ENCODE measurements at regions of chr16 and their contacts with region 1.

Region 1: GRCh38 chr16:70770626-70771552 is 30.1 kb downstream of the VAC14 start:
- DNase-seq: peak; percentile 45
- H3K4me3 Mint-ChIP-seq: no peak overlapping the region
- H3K27ac Mint-ChIP-seq: no peak overlapping the region
- H3K4me1 Mint-ChIP-seq: peaks cover 9% of the 10 kb centered on the region
- H3K27me3 Mint-ChIP-seq: no peaks in the 10 kb centered on the region

Region 2: DNA sequence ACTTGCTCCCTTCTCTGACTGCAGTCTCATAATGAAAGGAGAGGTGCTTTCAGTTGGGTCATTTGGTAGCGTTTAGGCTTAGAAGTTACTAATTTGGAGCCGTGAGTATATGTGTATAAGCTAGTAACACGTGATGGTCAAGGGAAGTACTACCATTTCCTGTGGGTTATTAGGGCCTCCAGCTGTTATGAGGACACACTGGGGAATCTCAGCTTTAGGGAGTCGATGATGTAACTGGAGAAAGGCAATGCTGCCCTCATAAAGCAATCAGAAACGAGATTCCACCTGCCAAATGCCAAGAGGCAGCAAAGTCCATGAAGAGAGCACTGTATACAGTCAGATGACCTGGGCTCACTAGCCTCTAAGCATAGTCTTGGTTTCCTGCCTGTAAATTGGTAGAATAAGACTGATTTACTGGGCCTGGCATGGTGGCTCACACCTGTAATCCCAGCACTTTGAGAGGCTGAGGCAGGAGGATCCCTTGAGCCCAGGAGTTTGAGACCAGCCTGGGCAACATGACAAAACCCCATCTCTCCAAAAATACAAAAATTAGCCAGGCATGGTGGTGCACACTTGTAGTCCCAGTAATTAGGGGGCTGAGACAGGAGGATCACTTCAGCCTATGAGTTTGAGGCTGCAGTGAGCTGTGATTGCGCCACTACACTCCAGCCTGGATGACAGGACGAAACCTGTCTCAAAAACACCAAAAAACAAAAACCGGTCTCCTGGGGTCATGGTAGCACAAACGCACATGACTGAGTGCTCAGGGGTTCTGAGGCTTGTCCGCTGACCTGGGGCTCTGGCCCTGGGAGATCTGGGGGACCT is 194.2 kb before region 1 on chr16:
- intact Hi-C with region 1: loop called (anchors 2 kb)
- DNase-seq: no peak
- H3K4me3 Mint-ChIP-seq: no peak overlapping the region
- H3K27ac Mint-ChIP-seq: peak overlapping the region; percentile 10
- H3K4me1 Mint-ChIP-seq: peaks cover 17% of the 10 kb centered on the region
- H3K27me3 Mint-ChIP-seq: no peaks in the 10 kb centered on the region

Region 3: GRCh38 chr16:70589998-70590471 is 180.9 kb before region 1 on chr16:
- intact Hi-C with region 1: no loop called
- DNase-seq: no peak
- H3K4me3 Mint-ChIP-seq: no peak overlapping the region
- H3K27ac Mint-ChIP-seq: no peak overlapping the region
- H3K4me1 Mint-ChIP-seq: no peaks in the 10 kb centered on the region
- H3K27me3 Mint-ChIP-seq: no peaks in the 10 kb centered on the region

Region 4: DNA sequence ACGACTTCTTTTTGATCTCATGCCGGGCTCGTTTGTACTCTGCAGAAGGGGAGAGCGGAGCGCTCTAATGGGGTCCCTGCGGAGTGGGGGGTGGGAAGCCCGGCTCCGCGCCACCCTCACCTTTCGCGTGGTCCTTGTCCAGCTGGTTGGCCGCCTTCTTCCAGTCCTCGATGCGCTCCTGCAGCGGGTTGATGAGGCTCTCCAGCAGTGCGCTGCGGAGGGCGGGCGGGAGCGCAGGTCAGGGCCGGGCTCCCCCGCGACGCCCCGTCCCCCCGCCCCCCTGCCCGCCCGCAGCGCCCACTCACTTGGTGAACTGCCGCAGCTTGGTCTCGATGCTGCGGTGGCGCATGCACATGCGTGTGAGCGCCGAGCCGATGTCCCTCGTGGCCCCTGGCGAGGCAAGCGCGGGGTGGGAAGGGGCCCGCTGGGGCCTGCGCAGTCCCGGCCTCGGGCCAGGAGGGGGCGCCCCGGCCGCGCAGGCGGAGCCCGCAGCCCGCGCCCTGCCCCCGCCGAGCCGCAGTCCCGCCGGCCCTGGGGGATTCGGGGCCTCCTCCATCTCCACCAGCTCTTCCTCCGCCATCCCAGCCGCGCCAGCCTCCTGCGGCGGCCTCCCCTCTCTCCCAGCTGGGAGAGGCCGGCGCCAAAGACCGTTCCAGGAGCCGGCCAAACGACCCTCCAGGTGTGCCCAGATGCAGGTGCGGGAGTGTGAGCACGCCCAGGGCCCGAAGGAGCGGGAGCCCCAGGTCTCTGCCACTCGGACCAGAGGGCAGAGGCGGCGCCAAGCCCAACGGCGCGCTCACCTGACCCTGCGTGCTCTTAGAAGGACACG is 91.0 kb before region 1 on chr16:
- intact Hi-C with region 1: loop called (anchors 1 kb)
- DNase-seq: no peak
- H3K4me3 Mint-ChIP-seq: no peak overlapping the region
- H3K27ac Mint-ChIP-seq: no peak overlapping the region
- H3K4me1 Mint-ChIP-seq: peaks cover 5% of the 10 kb centered on the region
- H3K27me3 Mint-ChIP-seq: peaks cover 11% of the 10 kb centered on the region